Activated CD4-positive, alpha-beta T cell treated with anti-CD3 and anti-CD28 coated beads, Interleukin-2, amount 10 ng/mL, durations not matched to agents 24 days and 14 days (primary cell): ENCODE measurements at regions of chr4 and their contacts with region 1.

Region 1: GRCh38 chr4:108849611-108850168 is 86.8 kb upstream of the ETNPPL start:
- DNase-seq: peak; percentile 72
- H3K4me3 Mint-ChIP-seq: peak overlapping the region; percentile 68
- H3K27ac Mint-ChIP-seq: peak overlapping the region; percentile 56
- H3K4me1 Mint-ChIP-seq: peaks cover 26% of the 10 kb centered on the region
- H3K27me3 Mint-ChIP-seq: peaks cover 1% of the 10 kb centered on the region

Region 2: GRCh38 chr4:108881190-108881589 is 31.5 kb after region 1 on chr4:
- intact Hi-C with region 1: loop called (anchors 5 kb)
- DNase-seq: no peak
- H3K4me3 Mint-ChIP-seq: no peak overlapping the region
- H3K27ac Mint-ChIP-seq: no peak overlapping the region
- H3K4me1 Mint-ChIP-seq: peaks cover 11% of the 10 kb centered on the region
- H3K27me3 Mint-ChIP-seq: peaks cover 2% of the 10 kb centered on the region

Region 3: GRCh38 chr4:108972613-108973283 is 123.1 kb after region 1 on chr4:
- intact Hi-C with region 1: loop called (anchors 2 kb)
- DNase-seq: peak; percentile 77
- H3K4me3 Mint-ChIP-seq: peak overlapping the region; percentile 63
- H3K27ac Mint-ChIP-seq: peak overlapping the region; percentile 86
- H3K4me1 Mint-ChIP-seq: peaks cover 31% of the 10 kb centered on the region
- H3K27me3 Mint-ChIP-seq: no peaks in the 10 kb centered on the region